Naive thymus-derived CD8-positive, alpha-beta T cell (primary cell): ENCODE measurements at regions of chr5 and their contacts with region 1.

Region 1: DNA sequence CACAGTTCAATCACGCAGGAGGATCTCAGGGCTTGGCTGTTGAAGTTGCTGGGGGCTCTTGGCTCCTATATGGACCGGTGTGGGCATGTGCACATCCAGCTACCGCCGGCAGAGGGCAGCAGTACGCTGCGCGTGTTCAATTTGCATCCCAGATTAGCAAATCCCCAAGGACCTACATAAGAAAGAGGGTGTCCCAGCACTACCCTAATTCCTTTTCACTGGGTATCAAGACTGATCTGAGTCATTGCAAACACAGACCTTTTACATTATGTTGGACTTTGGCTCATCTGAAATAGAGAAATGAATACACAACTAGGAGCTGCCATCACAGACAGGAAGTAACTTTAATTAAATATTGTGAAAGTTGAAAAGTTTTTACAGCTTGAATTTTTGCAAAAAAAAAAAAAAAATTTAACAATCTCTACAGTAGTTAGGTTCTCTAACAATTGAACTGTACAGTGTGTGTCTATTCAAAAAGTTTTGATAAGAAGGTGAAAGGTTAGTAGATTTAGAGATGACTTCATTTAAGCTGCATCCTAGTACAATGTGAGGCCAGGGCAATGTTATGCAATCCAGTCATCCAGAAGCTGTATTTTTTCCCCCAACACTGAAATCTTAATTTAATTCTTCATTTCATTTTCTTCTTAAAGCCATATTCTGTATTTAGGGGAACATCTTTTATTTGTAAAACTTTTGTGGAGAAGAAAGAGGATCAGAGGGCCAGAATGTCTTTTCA is 404.0 kb downstream of the EBF1 start:
- DNase-seq: peak; percentile 31 to 79 (median 64)
- ATAC-seq: peak; percentile 78
- H3K4me3 Mint-ChIP-seq: peak overlapping the region in 9 of 10 donors; percentile 9 to 76 (median 38)
- H3K27ac Mint-ChIP-seq: peak overlapping the region in 1 of 10 donors; percentile 2
- H3K4me1 Mint-ChIP-seq: peaks cover 3 to 13% (median 4%) of the 10 kb centered on the region in 4 donors
- H3K27me3 Mint-ChIP-seq: no peaks in the 10 kb centered on the region

Region 2: DNA sequence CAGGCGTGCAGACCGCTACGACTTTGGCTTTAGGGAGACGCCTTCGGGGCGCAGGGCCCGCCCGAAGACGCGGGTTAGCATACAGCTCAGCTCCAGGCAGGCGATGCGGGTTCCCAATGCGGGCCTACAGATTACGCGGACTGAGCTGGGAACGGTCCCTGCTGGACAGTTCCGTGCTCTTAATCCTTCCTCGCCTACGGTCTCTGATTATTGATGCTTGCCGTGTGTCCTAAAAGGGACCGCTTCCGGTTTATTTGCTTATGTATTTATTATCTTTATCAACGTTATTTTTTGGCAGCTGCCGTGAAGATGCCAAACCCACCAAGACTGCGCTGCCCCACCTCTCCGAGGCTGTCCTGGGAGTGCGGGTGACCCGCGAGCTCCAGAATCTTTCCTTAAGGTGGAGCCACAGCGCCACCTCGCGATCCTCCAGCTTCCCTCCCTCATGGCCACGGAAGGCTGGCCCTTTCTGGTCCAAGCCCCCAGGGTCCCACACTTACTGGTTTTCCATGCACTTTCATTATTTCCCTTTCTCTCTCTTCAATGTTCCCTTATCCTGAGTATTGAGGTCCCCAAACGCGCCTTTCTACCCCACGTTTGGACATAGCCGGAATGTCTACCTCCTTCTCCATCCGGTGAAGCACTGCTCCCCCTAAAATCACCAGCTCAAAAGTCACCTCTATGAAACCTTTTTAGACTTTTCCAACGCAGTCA is 411.0 kb after region 1 on chr5:
- POLR2A ChIA-PET with region 1: interaction called, 14 read pairs
- DNase-seq: peak; percentile 51 to 82 (median 68)
- ATAC-seq: peak; percentile 78 to 88
- H3K4me3 Mint-ChIP-seq: peak overlapping the region; percentile 73 to 93 (median 86)
- H3K27ac Mint-ChIP-seq: peak overlapping the region in 3 of 10 donors; percentile 5 to 70 (median 46)
- H3K4me1 Mint-ChIP-seq: peaks cover 6 to 44% (median 24%) of the 10 kb centered on the region in 4 donors
- H3K27me3 Mint-ChIP-seq: peaks cover 31 to 64% (median 54%) of the 10 kb centered on the region in 5 donors